Heart right ventricle (tissue), 16 donors: ENCODE measurements at regions of chr6 and their contacts with region 1.

Region 1: GRCh38 chr6:33585403-33586107 is 5.5 kb upstream of the BAK1 start:
- DNase-seq: peak; percentile 83 to 84
- ATAC-seq: peak; percentile 59 to 73 (median 68)
- H3K4me3 ChIP-seq: peak overlapping the region in 4 of 10 donors; percentile 8 to 23 (median 16)
- H3K27ac ChIP-seq: peak overlapping the region in 8 of 10 donors; percentile 2 to 58 (median 30)
- H3K4me1 ChIP-seq: peaks cover 12 to 40% (median 31%) of the 10 kb centered on the region in 9 donors
- H3K27me3 ChIP-seq: no peaks in the 10 kb centered on the region
- CTCF ChIP-seq: peak; percentile 96 to 100 (median 99)

Region 2: GRCh38 chr6:31922942-31923341 is 1662.6 kb before region 1 on chr6:
- intact Hi-C with region 1: no loop called
- DNase-seq: no peak
- ATAC-seq: no peak
- H3K4me3 ChIP-seq: no peak overlapping the region
- H3K27ac ChIP-seq: no peak overlapping the region
- H3K4me1 ChIP-seq: peaks cover 0 to 10% (median 0%) of the 10 kb centered on the region in 9 donors
- H3K27me3 ChIP-seq: no peaks in the 10 kb centered on the region
- CTCF ChIP-seq: peak in 3 of 9 donors; percentile 20 to 24 (median 24)

Region 3: DNA sequence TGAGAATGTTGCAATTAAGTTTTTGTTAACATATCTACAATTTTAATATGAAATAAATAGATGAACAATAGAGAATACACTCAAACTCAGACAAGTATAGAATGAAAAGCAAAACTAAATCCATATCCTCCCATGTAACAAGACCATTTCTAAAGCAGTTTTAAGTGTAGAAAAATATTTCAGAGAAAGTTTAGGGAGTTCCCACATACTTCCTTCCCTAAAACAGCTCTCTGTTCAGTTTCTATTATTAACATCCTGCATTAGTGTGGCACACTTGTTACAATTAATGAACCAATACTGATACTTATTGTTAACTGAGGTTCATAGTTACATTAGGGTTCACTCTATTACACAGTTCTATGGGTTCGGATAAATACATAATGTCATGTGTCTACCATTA is 1093.9 kb before region 1 on chr6:
- intact Hi-C with region 1: no loop called
- DNase-seq: no peak
- ATAC-seq: no peak
- H3K4me3 ChIP-seq: no peak overlapping the region
- H3K27ac ChIP-seq: no peak overlapping the region
- H3K4me1 ChIP-seq: no peaks in the 10 kb centered on the region
- H3K27me3 ChIP-seq: peaks cover 0 to 6% (median 0%) of the 10 kb centered on the region in 7 donors
- CTCF ChIP-seq: no peak

Region 4: DNA sequence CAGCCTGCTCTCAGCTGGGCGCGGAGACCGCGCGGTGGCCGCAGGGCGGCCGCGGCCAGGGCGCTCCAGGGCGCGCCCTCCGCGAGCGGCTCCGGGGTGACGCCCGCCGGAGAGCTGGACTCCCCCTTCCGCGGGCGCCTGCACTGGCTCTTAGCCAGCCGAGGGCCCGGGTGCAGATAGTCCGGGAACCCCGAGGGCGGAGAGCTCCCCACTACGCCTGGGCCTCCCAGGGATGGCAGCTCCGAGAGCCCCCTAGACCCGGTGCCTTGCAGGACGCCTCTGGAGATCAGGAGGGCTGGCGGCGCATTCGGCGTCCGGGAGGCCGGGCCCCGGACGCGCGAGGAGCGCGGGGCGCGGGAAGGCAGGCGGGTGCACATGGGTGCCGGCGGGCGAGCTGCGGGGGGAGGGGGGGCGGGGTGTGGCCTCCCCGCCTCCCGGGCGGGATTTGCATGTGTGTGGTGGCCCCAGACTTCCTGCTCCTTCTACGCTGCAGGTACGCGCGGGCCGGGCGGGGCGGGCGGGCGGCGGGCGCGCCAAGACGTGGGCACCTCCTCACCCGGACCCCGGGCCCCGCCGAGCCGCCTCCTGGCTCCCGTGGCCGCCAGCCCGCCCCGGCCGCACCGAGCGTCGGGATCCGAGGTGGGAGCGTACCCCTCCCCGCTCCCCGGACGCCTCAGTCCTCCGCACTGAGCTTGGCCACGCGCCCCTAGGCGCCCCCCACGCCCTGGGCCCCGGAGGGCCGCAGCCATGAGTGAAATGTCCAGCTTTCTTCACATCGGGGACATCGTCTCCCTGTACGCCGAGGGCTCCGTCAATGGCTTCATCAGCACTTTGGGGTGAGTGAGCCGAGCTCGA is 35.5 kb after region 1 on chr6 and contains the start of gene ITPR3:
- intact Hi-C with region 1: loop called in 2 of 10 experiments (anchors 5 kb)
- DNase-seq: peak; percentile 26 to 64
- ATAC-seq: peak; percentile 41 to 74 (median 60)
- H3K4me3 ChIP-seq: peak within 1 kb of the TSS; percentile 59 to 77 (median 71)
- H3K27ac ChIP-seq: peak within 1 kb of the TSS; percentile 67 to 97 (median 92)
- H3K4me1 ChIP-seq: peaks cover 0 to 45% (median 24%) of the 10 kb centered on the region in 9 donors
- H3K27me3 ChIP-seq: peaks cover 0 to 11% (median 8%) of the 10 kb centered on the region in 7 donors
- CTCF ChIP-seq: no peak
- total RNA-seq, gene ITPR3: 3.2 to 16.7 (median 5.5) TPM

Region 5: GRCh38 chr6:33672808-33673207 is 87.3 kb after region 1 on chr6:
- intact Hi-C with region 1: loop called in 7 of 10 experiments (anchors 1 to 10 kb)
- DNase-seq: peak; percentile 81 to 88
- ATAC-seq: peak; percentile 84 to 97 (median 92)
- H3K4me3 ChIP-seq: no peak overlapping the region
- H3K27ac ChIP-seq: no peak overlapping the region
- H3K4me1 ChIP-seq: peaks cover 0 to 14% (median 8%) of the 10 kb centered on the region in 9 donors
- H3K27me3 ChIP-seq: no peaks in the 10 kb centered on the region
- CTCF ChIP-seq: peak; percentile 31 to 79 (median 58)

Region 6: GRCh38 chr6:33751771-33752645 is 166.5 kb after region 1 on chr6:
- intact Hi-C with region 1: loop called in 1 of 10 experiments (anchors 10 kb)
- DNase-seq: no peak
- ATAC-seq: no peak
- H3K4me3 ChIP-seq: no peak overlapping the region
- H3K27ac ChIP-seq: no peak overlapping the region
- H3K4me1 ChIP-seq: peaks cover 0 to 9% (median 2%) of the 10 kb centered on the region in 9 donors
- H3K27me3 ChIP-seq: no peaks in the 10 kb centered on the region
- CTCF ChIP-seq: no peak